IMR-90 (cell line): ENCODE measurements at regions of chr16 and their contacts with region 1.

Region 1: GRCh38 chr16:20383106-20384029 is 21.2 kb downstream of the PDILT start:
- DNase-seq: peak; percentile 54
- ATAC-seq: peak; percentile 96
- H3K4me3 ChIP-seq: no peak overlapping the region
- H3K27ac ChIP-seq: no peak overlapping the region
- H3K4me1 ChIP-seq: no peaks in the 10 kb centered on the region
- H3K27me3 ChIP-seq: no peaks in the 10 kb centered on the region
- CTCF ChIP-seq: peak; percentile 67
- POLR2A ChIP-seq: no peak
- RAD21 ChIP-seq: peak; percentile 60

Region 2: DNA sequence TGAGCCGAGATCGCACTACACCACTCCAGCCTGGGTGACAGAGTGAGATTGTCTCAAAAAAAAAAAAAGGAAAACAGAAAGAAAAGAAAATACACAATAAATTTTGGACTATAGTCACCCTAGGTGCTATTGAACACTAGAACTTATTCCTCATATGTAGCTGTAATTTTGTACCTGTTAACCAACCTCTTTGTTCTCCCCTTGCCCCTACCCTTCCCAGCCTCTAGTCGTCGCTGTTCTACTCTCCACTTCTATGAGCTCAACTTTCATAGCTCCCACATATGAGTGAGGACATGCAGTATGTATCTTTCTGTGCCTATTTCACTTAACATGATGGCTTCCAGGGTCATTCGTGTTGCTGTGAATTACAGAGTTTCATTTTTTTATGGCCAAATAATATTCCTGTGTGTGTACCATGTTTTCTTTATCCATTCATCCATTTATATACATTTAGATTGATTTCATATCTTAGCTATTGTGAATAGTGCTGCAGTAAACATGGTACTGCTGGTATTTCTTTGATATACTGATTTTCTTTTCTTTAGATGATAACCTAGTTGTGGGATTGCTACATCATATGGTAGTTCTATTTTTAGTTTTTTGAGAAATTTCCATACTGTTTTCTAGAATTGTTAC is 799.6 kb before region 1 on chr16:
- CTCF ChIA-PET with region 1: no interaction called
- POLR2A ChIA-PET with region 1: no interaction called
- dilution Hi-C with region 1: no loop called
- in situ Hi-C with region 1: no loop called
- intact Hi-C with region 1: loop called (anchors 10 kb)
- DNase-seq: peak; percentile 55
- ATAC-seq: peak; percentile 91
- H3K4me3 ChIP-seq: no peak overlapping the region
- H3K27ac ChIP-seq: no peak overlapping the region
- H3K4me1 ChIP-seq: no peaks in the 10 kb centered on the region
- H3K27me3 ChIP-seq: no peaks in the 10 kb centered on the region
- CTCF ChIP-seq: peak; percentile 68
- POLR2A ChIP-seq: no peak
- RAD21 ChIP-seq: peak; percentile 54

Region 3: GRCh38 chr16:19601083-19601976 is 782.0 kb before region 1 on chr16:
- CTCF ChIA-PET with region 1: no interaction called
- POLR2A ChIA-PET with region 1: no interaction called
- dilution Hi-C with region 1: no loop called
- in situ Hi-C with region 1: loop called (anchors 25 kb)
- intact Hi-C with region 1: no loop called
- DNase-seq: peak; percentile 36
- ATAC-seq: peak; percentile 57
- H3K4me3 ChIP-seq: no peak overlapping the region
- H3K27ac ChIP-seq: no peak overlapping the region
- H3K4me1 ChIP-seq: no peaks in the 10 kb centered on the region
- H3K27me3 ChIP-seq: no peaks in the 10 kb centered on the region
- CTCF ChIP-seq: peak; percentile 67
- POLR2A ChIP-seq: no peak
- RAD21 ChIP-seq: peak; percentile 75

Region 4: GRCh38 chr16:19898924-19899604 is 484.3 kb before region 1 on chr16:
- CTCF ChIA-PET with region 1: interaction called, 11 read pairs
- POLR2A ChIA-PET with region 1: no interaction called
- dilution Hi-C with region 1: no loop called
- in situ Hi-C with region 1: no loop called
- intact Hi-C with region 1: loop called (anchors 2 kb)
- DNase-seq: peak; percentile 46
- ATAC-seq: peak; percentile 93
- H3K4me3 ChIP-seq: no peak overlapping the region
- H3K27ac ChIP-seq: no peak overlapping the region
- H3K4me1 ChIP-seq: no peaks in the 10 kb centered on the region
- H3K27me3 ChIP-seq: no peaks in the 10 kb centered on the region; the same call in 1 of the 2 replicates
- CTCF ChIP-seq: peak; percentile 71
- POLR2A ChIP-seq: no peak
- RAD21 ChIP-seq: peak; percentile 69

Region 5: GRCh38 chr16:19907161-19907992 is 476.0 kb before region 1 on chr16:
- CTCF ChIA-PET with region 1: interaction called, 76 read pairs
- POLR2A ChIA-PET with region 1: no interaction called
- dilution Hi-C with region 1: no loop called
- in situ Hi-C with region 1: loop called (anchors 5 kb)
- intact Hi-C with region 1: loop called (anchors 1 kb)
- DNase-seq: peak; percentile 64
- ATAC-seq: peak; percentile 100
- H3K4me3 ChIP-seq: no peak overlapping the region
- H3K27ac ChIP-seq: no peak overlapping the region
- H3K4me1 ChIP-seq: no peaks in the 10 kb centered on the region
- H3K27me3 ChIP-seq: peaks cover 2% of the 10 kb centered on the region; the same call in 1 of the 2 replicates
- CTCF ChIP-seq: peak; percentile 95
- POLR2A ChIP-seq: no peak
- RAD21 ChIP-seq: peak; percentile 93